ENCODE measurements at regions of chr2 and their contacts with region 1.

Region 1: DNA sequence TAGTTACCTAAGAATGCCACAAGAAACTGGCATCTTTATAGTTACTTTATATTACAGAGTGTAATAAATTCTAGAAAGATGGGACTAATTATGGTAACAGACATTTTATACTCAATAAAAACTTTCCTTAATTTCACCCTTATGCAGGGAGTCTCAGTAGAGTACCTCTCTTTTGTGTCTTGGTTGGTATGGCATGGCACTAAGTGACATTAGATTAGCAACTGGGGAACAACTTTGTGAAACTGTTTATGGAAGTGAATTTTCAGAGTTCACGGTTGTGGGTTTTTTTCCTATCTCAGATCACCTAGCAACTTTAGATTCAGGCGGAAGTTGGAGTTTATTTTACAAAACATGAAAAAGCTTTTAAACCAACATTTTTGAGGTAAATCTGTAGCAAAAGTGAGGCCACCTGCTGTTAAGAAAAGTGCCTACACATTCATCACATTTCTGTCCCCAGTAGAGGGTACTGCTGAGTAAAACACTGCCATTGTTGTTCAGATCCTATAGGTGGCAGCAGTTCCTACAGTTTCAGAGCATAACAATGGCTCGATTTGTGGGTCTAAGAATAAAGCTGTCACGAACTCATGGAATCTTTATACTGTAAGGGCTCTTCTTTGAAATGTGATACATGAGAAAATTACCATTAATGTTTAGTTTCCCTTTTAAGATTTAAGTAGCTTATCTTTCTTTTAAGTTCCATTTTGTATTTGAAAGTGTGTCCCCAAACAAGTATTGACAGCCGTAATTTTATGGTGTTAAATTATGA is 117.6 kb downstream of the CAMKMT start:
- DNase-seq: no peak
- ATAC-seq: peak; percentile 96

Region 2: DNA sequence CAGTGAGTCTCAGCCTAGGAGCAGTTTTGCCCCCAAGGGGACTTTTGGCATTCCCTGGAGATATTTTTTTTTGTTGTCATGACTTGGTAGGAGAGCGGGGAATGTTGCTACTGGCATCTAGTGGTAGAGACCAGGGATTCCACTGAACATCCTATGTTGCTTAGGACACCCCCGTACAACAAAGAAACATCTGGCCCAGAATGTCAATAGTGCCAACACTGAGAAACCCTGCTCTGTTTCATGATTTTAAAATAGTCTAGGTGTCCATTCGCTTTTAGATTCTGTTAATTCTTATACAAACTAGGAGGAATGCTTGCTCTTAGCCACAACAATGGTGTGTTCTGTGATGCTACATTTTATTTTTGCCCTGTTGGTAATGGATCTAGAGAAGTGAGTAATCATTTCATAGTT is 236.4 kb after region 1 on chr2:
- intact Hi-C with region 1: loop called (anchors 5 kb)
- DNase-seq: no peak
- ATAC-seq: peak; percentile 61